Mucosa of descending colon (tissue), 3 donors: ENCODE measurements at regions of chr19 and their contacts with region 1.

Region 1: GRCh38 chr19:13277104-13277809 is 127.0 kb downstream of the IER2 start:
- DNase-seq: peak; percentile 63 to 89 (median 63)
- ATAC-seq: peak; percentile 95
- H3K4me3 ChIP-seq: no peak overlapping the region
- H3K4me1 ChIP-seq: no peaks in the 10 kb centered on the region
- CTCF ChIP-seq: peak; percentile 51

Region 2: GRCh38 chr19:13162518-13163314 is 114.5 kb before region 1 on chr19:
- intact Hi-C with region 1: no loop called
- DNase-seq: peak; percentile 98 to 99 (median 99)
- ATAC-seq: peak; percentile 73
- H3K4me3 ChIP-seq: peak overlapping the region; percentile 16
- H3K4me1 ChIP-seq: peaks cover 45% of the 10 kb centered on the region
- CTCF ChIP-seq: no peak

Region 3: DNA sequence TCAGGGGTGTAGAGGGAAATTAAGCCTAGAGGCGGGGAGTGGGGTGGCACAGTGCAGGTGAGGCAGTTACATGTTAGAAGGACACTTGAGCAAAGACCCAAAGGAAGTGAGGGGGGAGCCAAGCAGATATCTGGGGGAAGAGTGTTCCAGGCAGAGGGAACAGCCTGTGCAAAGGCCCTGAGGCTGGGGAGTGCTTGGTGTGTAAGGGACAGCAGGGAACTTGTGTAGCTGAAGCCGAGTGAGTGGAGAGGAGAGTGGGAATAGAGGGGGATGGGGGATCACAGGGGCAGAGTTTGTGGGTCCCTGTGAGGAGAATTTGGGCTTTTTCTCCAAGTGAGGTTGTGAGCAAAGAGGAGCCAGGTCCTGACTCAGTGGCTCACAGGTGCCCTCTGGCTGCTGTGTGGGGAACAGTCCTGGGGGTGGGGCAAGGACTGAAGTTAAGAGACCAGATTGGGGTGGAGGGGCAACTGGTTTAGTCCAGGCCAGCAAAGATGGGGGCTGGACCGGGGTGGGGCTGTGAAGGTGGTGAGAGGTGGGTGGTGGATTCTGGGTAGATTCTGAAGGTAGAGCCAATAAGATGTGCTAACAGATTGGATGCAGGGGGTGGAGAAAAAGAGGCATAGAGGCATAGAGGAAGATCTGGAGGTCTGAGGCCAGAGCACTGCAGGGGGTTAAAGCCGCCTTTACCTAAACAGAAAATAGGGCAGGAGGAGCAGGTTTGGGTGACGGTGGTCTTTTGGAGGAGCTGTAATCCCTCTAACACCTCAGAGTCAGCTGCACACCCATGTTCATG is 153.7 kb after region 1 on chr19:
- intact Hi-C with region 1: loop called in 1 of 2 experiments (anchors 10 kb)
- DNase-seq: peak in 2 of 3 donors; percentile 54 to 59
- ATAC-seq: peak; percentile 50
- H3K4me3 ChIP-seq: no peak overlapping the region
- H3K4me1 ChIP-seq: no peaks in the 10 kb centered on the region
- CTCF ChIP-seq: peak; percentile 34

Region 4: GRCh38 chr19:13588957-13589833 is 311.9 kb after region 1 on chr19:
- intact Hi-C with region 1: loop called (anchors 5 to 10 kb)
- DNase-seq: peak; percentile 63 to 82 (median 79)
- ATAC-seq: peak; percentile 90
- H3K4me3 ChIP-seq: no peak overlapping the region
- H3K4me1 ChIP-seq: no peaks in the 10 kb centered on the region
- CTCF ChIP-seq: peak; percentile 97